OCI-LY7 (cell line): ENCODE measurements at regions of chr14 and their contacts with region 1.

Region 1: DNA sequence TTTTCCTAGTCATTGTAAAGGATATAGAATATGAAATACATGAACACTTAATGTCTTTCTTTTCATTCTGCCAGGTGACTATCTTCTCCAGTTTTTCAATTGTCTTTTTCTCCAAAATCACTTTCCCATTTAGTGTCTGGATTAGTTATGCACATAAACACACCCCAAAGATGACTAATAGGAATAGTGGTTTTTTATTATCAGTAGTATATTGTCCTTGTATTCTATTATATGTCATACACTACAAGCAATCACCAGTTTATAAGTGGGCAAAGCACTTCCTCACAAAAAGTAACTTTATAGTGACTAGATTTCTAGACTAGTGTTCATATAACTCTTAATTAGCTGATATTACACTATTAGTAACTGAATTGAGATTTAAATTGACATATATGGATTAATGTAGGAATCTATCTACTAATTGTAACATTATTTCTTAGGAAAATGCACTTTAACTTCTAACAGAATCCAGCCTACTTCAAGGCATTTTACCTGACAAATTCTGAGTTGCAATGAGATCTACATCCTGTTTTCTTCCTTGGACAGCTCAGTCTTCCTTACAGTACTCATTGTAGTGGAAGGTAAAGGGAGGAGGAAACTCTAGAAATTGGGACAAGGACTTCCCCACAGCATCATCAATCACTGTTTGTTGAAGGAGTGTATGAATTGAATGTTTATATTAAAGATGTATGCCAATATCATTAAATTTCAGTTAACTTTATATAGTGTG is 186.1 kb upstream of the GARIN2 start:
- DNase-seq: no peak
- H3K4me3 ChIP-seq: no peak overlapping the region
- H3K27ac ChIP-seq: no peak overlapping the region
- H3K4me1 ChIP-seq: no peaks in the 10 kb centered on the region
- CTCF ChIP-seq: no peak

Region 2: DNA sequence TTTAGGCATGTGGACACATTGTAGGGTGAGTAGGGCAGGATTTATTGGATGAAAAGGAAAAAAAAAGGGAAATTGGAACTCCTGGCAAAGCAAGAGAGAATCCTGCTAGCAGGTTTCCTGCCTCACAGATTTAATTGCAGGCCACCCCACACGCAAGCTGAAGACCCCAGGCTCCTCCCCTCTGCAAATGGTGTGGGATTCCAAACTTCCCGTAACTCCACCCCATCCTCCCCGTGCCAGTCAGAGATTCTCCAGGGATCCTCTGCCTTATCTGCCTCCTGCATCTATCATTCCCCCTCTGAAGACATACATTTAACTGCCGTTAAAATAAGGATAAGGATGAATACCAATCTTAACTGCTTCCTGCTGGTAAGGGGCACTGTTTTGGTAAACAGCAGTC is 63.8 kb before region 1 on chr14:
- CTCF ChIA-PET with region 1: no interaction called
- POLR2A ChIA-PET with region 1: interaction called, 11 read pairs
- intact Hi-C with region 1: no loop called
- DNase-seq: no peak
- H3K4me3 ChIP-seq: no peak overlapping the region
- H3K27ac ChIP-seq: no peak overlapping the region
- H3K4me1 ChIP-seq: no peaks in the 10 kb centered on the region
- CTCF ChIP-seq: no peak